Colonic mucosa (tissue), 4 donors: ENCODE measurements at regions of chr18 and their contacts with region 1.

Region 1: GRCh38 chr18:55234366-55235093 is 275.3 kb upstream of the CCDC68 start:
- DNase-seq: peak; percentile 84
- H3K4me3 ChIP-seq: no peak overlapping the region
- H3K27ac ChIP-seq: no peak overlapping the region
- H3K4me1 ChIP-seq: no peaks in the 10 kb centered on the region
- H3K27me3 ChIP-seq: no peaks in the 10 kb centered on the region
- CTCF ChIP-seq: peak; percentile 53

Region 2: DNA sequence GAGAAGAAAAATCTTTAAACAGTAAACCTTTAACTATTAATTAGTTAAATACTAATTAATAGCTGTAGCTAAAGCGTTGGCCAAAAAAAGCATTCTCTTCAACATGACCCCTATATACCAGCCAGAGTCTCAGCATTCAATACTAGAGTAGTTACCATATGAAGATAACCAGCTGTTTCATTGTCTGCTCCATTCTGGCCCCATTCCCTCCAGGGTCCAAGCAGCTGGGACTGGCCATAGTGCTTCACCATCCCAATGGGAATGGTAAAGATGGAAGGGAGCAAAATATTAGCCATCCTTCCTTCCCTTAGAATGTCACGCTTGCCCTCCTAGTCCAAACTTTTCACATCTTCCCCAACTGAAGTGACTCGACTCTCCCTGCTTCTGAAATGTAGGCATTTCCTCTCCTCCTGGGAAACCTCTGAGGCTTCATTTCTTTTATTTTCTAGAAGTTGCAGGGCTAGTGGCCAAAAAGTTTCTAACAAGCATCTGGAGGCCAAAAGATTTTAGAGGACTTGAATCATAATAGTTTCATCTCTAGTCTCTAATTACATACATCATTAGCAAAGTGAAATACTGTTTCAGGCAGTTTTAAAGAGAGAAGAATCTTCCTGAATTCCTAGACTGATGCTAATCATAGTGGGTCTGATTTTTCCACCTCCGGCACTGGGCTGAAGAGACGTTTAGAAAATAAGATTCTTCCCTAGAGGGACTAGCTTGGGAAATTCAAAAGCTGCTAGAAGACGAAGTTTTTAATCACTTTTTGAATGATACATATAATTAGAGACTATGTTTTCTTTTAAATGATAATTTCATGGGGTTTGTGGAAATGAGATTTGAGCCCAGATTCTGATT is 328.0 kb before region 1 on chr18:
- intact Hi-C with region 1: no loop called
- DNase-seq: no peak
- H3K4me3 ChIP-seq: no peak overlapping the region
- H3K27ac ChIP-seq: no peak overlapping the region
- H3K4me1 ChIP-seq: no peaks in the 10 kb centered on the region
- H3K27me3 ChIP-seq: no peaks in the 10 kb centered on the region
- CTCF ChIP-seq: no peak

Region 3: GRCh38 chr18:55415258-55415871 is 180.8 kb after region 1 on chr18:
- intact Hi-C with region 1: loop called (anchors 10 kb)
- DNase-seq: peak; percentile 82
- H3K4me3 ChIP-seq: no peak overlapping the region
- H3K27ac ChIP-seq: no peak overlapping the region
- H3K4me1 ChIP-seq: no peaks in the 10 kb centered on the region
- H3K27me3 ChIP-seq: no peaks in the 10 kb centered on the region
- CTCF ChIP-seq: peak; percentile 87

Region 4: GRCh38 chr18:55577812-55578539 is 343.4 kb after region 1 on chr18:
- intact Hi-C with region 1: loop called (anchors 10 kb)
- DNase-seq: no peak
- H3K4me3 ChIP-seq: no peak overlapping the region
- H3K27ac ChIP-seq: no peak overlapping the region
- H3K4me1 ChIP-seq: no peaks in the 10 kb centered on the region
- H3K27me3 ChIP-seq: no peaks in the 10 kb centered on the region
- CTCF ChIP-seq: no peak